CD4-positive, alpha-beta T cell (primary cell): ENCODE measurements at regions of chr10 and their contacts with region 1.

Region 1: GRCh38 chr10:88820748-88821389 is 18.3 kb downstream of the LIPM start:
- DNase-seq: peak in 1 of 14 experiments; percentile 28
- ATAC-seq: peak; percentile 24
- H3K4me3 ChIP-seq: no peak overlapping the region
- H3K4me3 Mint-ChIP-seq: no peak overlapping the region
- H3K27ac ChIP-seq: no peak overlapping the region
- H3K27ac Mint-ChIP-seq: peak overlapping the region; percentile 3
- H3K4me1 ChIP-seq: peaks cover 8% of the 10 kb centered on the region
- H3K4me1 Mint-ChIP-seq: peaks cover 65% of the 10 kb centered on the region
- H3K27me3 ChIP-seq: no peaks in the 10 kb centered on the region
- H3K27me3 Mint-ChIP-seq: no peaks in the 10 kb centered on the region
- CTCF ChIP-seq: no peak

Region 2: DNA sequence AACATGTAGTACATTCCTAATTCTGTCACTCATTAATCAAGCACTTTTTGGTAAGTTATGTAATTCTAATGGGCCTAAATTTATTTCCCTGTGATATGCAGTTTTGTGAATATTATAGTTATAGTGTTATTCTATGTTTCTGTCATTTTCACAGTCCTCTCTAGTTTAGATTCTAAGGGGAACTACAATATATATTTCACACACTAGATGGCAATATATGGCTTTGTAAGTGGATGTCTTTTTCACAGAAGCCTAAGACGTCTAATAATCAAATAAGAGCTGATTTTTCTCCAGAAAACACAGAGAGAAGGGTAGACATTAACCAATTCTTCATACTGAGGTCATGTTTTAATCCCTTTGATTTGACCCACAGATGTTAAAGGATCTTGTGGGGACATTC is 255.8 kb before region 1 on chr10:
- CTCF ChIA-PET with region 1: no interaction called
- POLR2A ChIA-PET with region 1: no interaction called
- intact Hi-C with region 1: loop called in 1 of 2 experiments (anchors 10 kb)
- DNase-seq: peak in 3 of 14 experiments; percentile 23 to 30 (median 29)
- ATAC-seq: peak; percentile 58
- H3K4me3 ChIP-seq: no peak overlapping the region
- H3K4me3 Mint-ChIP-seq: no peak overlapping the region
- H3K27ac ChIP-seq: no peak overlapping the region
- H3K27ac Mint-ChIP-seq: no peak overlapping the region
- H3K4me1 ChIP-seq: peaks cover 6% of the 10 kb centered on the region
- H3K4me1 Mint-ChIP-seq: no peaks in the 10 kb centered on the region
- H3K27me3 ChIP-seq: no peaks in the 10 kb centered on the region
- H3K27me3 Mint-ChIP-seq: no peaks in the 10 kb centered on the region
- CTCF ChIP-seq: peak; percentile 26

Region 3: GRCh38 chr10:88835096-88835909 is 14.4 kb after region 1 on chr10:
- CTCF ChIA-PET with region 1: interaction called, 32 read pairs
- POLR2A ChIA-PET with region 1: interaction called, 6 read pairs
- intact Hi-C with region 1: no loop called
- DNase-seq: peak; percentile 77 to 93 (median 83)
- ATAC-seq: peak; percentile 91
- H3K4me3 ChIP-seq: no peak overlapping the region
- H3K4me3 Mint-ChIP-seq: no peak overlapping the region
- H3K27ac ChIP-seq: no peak overlapping the region
- H3K27ac Mint-ChIP-seq: no peak overlapping the region
- H3K4me1 ChIP-seq: peaks cover 17% of the 10 kb centered on the region
- H3K4me1 Mint-ChIP-seq: peaks cover 33% of the 10 kb centered on the region
- H3K27me3 ChIP-seq: no peaks in the 10 kb centered on the region
- H3K27me3 Mint-ChIP-seq: no peaks in the 10 kb centered on the region
- CTCF ChIP-seq: peak; percentile 93